CD8-positive, alpha-beta T cell (primary cell): ENCODE measurements at regions of chr14 and their contacts with region 1.

Region 1: DNA sequence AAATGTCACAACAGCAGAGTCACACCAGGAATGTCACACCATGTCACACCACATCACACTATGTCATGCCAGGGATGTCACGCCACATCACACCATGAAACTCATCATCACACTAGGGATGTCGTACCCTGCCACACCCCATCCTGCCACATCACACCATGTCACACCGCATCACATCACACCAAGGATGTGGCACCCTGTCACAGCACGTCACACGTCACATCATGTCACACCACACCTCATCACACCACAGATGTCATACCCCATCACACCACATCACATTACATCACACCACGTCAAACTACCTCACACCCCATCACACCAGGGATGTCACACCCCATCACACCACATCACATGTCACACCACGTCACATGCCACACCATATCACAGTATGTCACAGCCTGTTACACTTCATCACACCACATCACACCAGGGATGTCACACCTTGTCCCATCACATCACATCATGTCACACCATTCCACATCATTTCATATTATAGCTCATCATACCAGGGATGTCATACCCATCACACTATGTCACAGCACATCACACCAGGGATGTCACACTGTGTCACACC is 90.9 kb downstream of the TMEM121 start:
- DNase-seq: peak in 1 of 9 experiments; percentile 18
- ATAC-seq: no peak
- H3K4me3 ChIP-seq: no peak overlapping the region
- H3K4me3 Mint-ChIP-seq: no peak overlapping the region
- H3K27ac ChIP-seq: no peak overlapping the region
- H3K27ac Mint-ChIP-seq: no peak overlapping the region
- H3K4me1 ChIP-seq: no peaks in the 10 kb centered on the region
- H3K4me1 Mint-ChIP-seq: no peaks in the 10 kb centered on the region
- H3K27me3 ChIP-seq: no peaks in the 10 kb centered on the region
- H3K27me3 Mint-ChIP-seq: peaks cover 12% of the 10 kb centered on the region
- CTCF ChIP-seq: no peak

Region 2: DNA sequence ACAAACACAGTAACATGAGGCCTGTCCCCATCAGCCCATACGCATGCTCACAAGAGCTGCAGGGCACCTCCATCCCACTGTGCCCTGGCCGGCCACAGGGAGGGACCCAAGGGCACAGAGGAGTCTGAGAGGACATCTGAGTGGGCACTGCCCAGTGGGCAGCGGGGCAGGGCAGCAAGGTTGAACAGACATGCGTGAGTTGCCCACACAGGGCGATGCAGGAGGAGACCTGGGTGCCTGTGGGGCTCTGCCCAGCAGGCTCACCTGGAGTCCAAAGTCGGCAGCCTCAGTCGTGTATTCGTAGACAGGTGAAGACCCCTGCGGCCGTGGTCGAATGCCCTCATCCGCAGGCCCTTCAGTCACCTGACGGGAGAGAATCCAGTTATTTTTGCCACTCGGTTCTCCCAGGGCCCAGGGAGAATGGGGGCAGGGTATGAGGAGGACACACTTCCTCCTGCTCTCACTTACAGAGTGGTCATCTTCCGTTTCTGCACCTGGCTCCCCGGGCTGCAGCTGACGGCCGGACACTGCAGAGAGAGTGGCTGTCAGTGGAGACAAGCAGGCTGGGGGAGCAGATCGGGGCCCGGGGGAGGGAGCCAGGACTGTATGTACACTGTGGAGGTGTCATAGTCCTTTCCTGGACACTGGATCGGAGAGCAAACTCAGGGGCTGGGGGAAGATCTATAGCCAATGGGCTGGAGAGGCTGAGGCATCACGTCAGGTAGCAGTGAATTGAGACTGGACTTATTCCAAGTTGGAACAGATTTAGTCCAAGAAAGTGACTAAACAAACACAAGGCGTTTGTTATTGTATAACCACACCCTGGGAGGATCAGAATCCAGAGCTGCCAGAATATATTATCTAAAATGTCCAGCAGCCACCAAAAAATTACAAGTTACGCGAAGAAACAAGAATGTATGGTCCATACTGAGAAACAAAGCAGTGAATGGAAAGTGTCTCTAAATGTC is 659.9 kb before region 1 on chr14:
- CTCF ChIA-PET with region 1: no interaction called
- POLR2A ChIA-PET with region 1: no interaction called
- intact Hi-C with region 1: no loop called
- DNase-seq: no peak
- ATAC-seq: no peak
- H3K4me3 ChIP-seq: no peak overlapping the region
- H3K4me3 Mint-ChIP-seq: no peak overlapping the region
- H3K27ac ChIP-seq: no peak overlapping the region
- H3K27ac Mint-ChIP-seq: no peak overlapping the region
- H3K4me1 ChIP-seq: no peaks in the 10 kb centered on the region
- H3K4me1 Mint-ChIP-seq: no peaks in the 10 kb centered on the region
- H3K27me3 ChIP-seq: peaks cover 0 to 2% of the 10 kb centered on the region in 2 experiments
- H3K27me3 Mint-ChIP-seq: peaks cover 21% of the 10 kb centered on the region
- CTCF ChIP-seq: no peak

Region 3: DNA sequence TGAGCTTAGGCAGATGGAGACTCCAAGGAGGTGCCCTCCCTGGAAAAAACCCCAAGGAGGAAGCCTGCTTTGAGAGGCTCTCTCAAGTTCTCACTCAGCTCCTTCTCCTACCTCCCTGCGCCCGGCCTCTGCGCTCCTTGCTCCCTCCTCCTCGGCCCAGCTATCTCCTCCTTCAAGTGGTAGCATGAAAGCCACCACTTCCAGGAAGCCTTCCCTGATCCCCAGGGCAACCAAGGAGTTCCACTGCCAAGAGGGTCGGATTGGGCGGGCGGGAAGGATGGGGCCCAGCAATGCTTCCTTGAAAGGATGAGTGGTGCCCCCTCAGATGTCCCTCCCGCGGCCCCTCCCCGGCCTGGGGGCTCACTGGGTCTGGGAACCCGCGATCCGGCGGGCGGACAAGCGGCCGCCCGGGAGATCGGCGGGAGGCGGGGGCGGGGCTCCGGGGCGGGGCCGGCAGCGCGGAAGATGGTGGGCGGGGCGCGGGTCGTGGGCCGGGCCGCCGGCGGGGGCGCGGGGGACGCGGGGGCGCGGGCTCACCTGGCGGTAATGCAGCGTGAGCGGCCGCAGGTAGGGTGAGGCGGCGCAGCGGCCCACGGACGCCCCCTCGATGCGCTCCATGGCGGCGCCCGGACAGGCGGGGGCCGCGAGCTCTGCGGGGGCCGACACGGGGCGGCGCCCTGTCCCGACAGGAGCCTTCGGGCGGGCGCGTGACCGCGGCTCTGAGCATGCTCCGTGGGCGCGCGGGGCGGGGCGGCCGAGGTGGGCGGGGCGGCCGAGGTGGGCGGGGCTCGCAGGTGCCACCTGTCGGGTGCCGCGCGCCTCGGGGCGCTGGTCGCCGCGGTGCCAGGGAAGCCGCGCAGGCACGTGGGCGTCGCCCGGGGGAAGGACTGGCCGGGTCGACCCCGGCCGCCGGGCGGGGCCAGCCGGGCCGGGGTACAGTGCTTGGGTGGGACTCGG is 436.4 kb before region 1 on chr14 and contains the start of gene NUDT14:
- CTCF ChIA-PET with region 1: no interaction called
- POLR2A ChIA-PET with region 1: no interaction called
- intact Hi-C with region 1: no loop called
- DNase-seq: peak; percentile 77 to 95 (median 86)
- ATAC-seq: peak; percentile 94
- H3K4me3 ChIP-seq: peak within 1 kb of the TSS; percentile 36 to 37
- H3K4me3 Mint-ChIP-seq: peak within 1 kb of the TSS; percentile 76
- H3K27ac ChIP-seq: no peak within 1 kb of the TSS
- H3K27ac Mint-ChIP-seq: no peak within 1 kb of the TSS
- H3K4me1 ChIP-seq: peaks cover 25% of the 10 kb centered on the region
- H3K4me1 Mint-ChIP-seq: peaks cover 16% of the 10 kb centered on the region
- H3K27me3 ChIP-seq: no peaks in the 10 kb centered on the region
- H3K27me3 Mint-ChIP-seq: no peaks in the 10 kb centered on the region
- CTCF ChIP-seq: no peak
- total RNA-seq, gene NUDT14: 5.7 to 6.2 TPM

Region 4: DNA sequence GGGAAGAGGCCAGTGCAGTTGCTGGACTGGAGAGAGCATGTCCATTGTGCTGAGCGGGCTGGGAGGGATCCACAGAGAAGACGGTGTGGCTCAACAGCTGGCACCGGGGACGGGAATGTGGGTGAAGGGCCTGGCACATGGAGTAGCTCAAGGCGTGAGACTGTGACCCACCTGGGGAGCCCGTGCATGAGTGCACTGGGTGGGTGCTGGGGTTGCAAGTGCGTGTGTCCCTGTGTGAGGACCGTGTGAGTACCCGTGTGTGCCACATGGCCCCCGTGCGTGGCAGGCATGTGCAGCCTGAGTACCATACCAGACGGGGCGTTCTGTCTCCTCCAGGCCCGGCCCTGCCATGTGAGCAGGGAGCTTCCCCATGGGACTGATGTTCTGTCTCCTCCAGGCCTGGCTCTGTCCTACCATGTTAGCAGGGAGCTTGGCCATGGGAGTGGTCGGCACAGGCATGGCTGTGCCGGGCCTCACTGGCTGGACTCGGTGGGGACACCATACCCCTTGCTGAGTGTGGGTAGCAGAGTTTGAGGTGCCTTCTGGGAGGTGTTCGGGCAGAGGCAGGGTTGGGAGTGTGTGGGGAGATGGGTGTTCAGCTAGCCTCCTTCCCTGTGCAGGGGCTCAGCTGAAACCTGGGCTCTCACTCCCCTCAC is 143.5 kb after region 1 on chr14:
- CTCF ChIA-PET with region 1: no interaction called
- POLR2A ChIA-PET with region 1: no interaction called
- intact Hi-C with region 1: loop called (anchors 5 to 10 kb)
- DNase-seq: peak in 1 of 9 experiments; percentile 40
- ATAC-seq: no peak
- H3K4me3 ChIP-seq: no peak overlapping the region
- H3K4me3 Mint-ChIP-seq: no peak overlapping the region
- H3K27ac ChIP-seq: no peak overlapping the region
- H3K27ac Mint-ChIP-seq: no peak overlapping the region
- H3K4me1 ChIP-seq: no peaks in the 10 kb centered on the region
- H3K4me1 Mint-ChIP-seq: no peaks in the 10 kb centered on the region
- H3K27me3 ChIP-seq: no peaks in the 10 kb centered on the region
- H3K27me3 Mint-ChIP-seq: peaks cover 5% of the 10 kb centered on the region
- CTCF ChIP-seq: no peak